ENCODE measurements at regions of chr12 and their contacts with region 1.

Region 1: GRCh38 chr12:64779354-64779974 is 20.3 kb upstream of the GNS start:
- DNase-seq: no peak
- H3K4me3 ChIP-seq: no peak overlapping the region
- H3K27ac ChIP-seq: peak overlapping the region in 1 of 2 donors; percentile 81
- H3K4me1 ChIP-seq: no peaks in the 10 kb centered on the region
- H3K27me3 ChIP-seq: no peaks in the 10 kb centered on the region
- CTCF ChIP-seq: no peak
- POLR2A ChIP-seq: no peak

Region 2: GRCh38 chr12:64105026-64105425 is 674.4 kb before region 1 on chr12:
- intact Hi-C with region 1: loop called (anchors 5 kb)
- DNase-seq: no peak
- H3K4me3 ChIP-seq: no peak overlapping the region
- H3K27ac ChIP-seq: peak overlapping the region; percentile 29 to 69
- H3K4me1 ChIP-seq: peaks cover 0 to 8% of the 10 kb centered on the region in 2 donors
- H3K27me3 ChIP-seq: no peaks in the 10 kb centered on the region
- CTCF ChIP-seq: no peak
- POLR2A ChIP-seq: no peak

Measured in breast epithelium (tissue), 4 donors.